AG04449 (cell line): ENCODE measurements at regions of chr1 and their contacts with region 1.

Region 1: DNA sequence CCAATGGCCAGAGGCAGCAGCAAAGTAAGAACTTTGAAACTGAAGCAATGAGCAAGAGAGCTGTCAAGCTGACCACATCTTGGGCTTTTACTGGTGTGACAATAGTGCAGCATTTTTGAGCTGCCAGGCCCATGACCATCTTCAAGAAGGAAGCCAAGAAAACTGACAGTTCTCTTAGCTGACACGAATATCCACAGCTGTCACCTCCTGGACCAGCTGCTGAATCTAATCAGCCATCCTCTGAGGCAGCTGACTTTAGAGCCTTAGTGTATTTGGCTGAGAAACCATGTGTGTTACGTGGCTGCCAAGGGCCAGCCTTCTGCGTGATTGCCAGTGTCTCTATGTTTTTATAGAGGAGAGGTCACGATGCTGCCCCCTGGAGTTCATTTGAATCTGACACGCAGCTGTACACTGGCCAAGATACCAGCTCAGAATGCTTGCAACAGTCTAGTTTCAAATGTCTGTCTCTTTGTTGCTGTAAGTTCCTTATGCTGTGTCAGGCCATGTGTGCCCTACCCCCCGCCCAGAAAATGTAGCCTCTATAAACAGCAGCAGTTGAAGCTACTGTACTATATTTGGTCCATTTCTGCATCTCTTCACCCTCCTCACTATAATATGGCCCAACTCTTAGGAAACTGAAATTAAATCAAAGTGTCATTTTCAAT is 39.7 kb downstream of the PALMD start:
- DNase-seq: peak; percentile 74
- H3K4me3 ChIP-seq: no peak overlapping the region
- CTCF ChIP-seq: peak; percentile 61

Region 2: GRCh38 chr1:99663501-99663900 is 22.1 kb before region 1 on chr1:
- CTCF ChIA-PET with region 1: interaction called, 11 read pairs
- POLR2A ChIA-PET with region 1: no interaction called
- DNase-seq: no peak
- H3K4me3 ChIP-seq: no peak overlapping the region
- CTCF ChIP-seq: no peak

Region 3: DNA sequence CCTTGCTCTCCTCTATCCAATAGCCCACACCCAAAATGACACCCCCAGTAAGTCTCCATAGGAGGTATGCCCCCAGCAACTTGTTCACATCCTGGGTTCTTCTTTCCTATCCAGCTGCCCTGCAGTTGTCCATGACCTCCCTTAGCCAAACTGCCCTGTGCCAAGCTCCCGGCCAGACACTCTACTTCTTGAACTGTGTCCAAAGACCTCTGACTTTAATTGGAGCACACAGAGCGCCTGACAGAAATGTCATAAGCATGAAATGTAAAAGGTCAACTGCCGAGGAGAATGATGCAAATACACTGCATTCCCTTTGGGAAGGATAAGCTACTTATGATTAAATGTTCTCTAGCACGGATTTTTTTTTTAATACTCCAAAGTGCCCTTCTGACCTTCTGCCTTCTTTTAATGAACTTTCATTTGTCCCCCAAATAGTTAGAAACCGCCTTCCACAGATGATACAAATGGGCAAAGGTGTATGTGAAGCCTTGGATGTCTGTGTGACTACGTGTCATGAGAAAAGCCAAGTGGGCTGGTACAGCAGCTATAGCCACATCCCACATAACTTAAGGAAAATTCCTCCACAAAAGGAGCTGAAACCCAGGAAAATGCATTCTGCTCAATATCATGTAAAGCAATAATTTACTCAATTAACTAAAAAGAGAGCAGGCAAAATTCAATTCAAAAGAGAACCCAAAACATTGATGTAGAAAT is 13.0 kb before region 1 on chr1:
- CTCF ChIA-PET with region 1: interaction called, 17 read pairs
- POLR2A ChIA-PET with region 1: interaction called, 3 read pairs
- DNase-seq: no peak
- H3K4me3 ChIP-seq: no peak overlapping the region
- CTCF ChIP-seq: no peak

Region 4: GRCh38 chr1:99696616-99697015 is 11.0 kb after region 1 on chr1:
- CTCF ChIA-PET with region 1: interaction called, 27 read pairs
- POLR2A ChIA-PET with region 1: no interaction called
- DNase-seq: no peak
- H3K4me3 ChIP-seq: no peak overlapping the region
- CTCF ChIP-seq: no peak

Region 5: DNA sequence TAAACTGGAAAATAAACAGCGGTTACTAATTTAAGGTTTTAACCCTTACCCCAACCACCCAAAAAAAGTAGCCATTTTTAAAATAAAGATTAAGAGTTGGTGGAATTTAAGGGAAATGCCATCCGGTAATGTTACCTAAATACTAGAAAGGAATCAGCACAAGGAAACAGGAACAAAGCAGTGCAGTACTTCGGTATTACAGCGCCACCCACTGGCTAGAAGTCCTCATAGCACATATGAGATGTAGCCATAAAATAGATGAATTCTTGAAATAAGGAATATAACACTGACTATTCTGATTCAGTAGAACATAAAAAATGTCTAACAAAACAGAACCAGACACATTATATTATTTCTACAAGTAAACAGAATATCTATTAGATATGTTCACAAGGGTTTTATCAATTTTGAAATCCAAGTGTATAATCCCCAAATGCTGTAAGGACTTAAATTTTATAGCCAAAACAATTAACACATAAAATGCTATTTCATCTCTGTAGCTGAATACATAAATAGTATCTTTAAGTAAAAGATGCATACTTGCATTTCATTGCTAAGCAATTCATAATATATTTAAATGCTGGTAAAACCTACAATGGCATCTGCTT is 22.0 kb after region 1 on chr1:
- CTCF ChIA-PET with region 1: interaction called, 16 read pairs
- POLR2A ChIA-PET with region 1: no interaction called
- DNase-seq: no peak
- H3K4me3 ChIP-seq: no peak overlapping the region
- CTCF ChIP-seq: peak; percentile 77